ENCODE measurements at regions of chr12 and their contacts with region 1.

Region 1: DNA sequence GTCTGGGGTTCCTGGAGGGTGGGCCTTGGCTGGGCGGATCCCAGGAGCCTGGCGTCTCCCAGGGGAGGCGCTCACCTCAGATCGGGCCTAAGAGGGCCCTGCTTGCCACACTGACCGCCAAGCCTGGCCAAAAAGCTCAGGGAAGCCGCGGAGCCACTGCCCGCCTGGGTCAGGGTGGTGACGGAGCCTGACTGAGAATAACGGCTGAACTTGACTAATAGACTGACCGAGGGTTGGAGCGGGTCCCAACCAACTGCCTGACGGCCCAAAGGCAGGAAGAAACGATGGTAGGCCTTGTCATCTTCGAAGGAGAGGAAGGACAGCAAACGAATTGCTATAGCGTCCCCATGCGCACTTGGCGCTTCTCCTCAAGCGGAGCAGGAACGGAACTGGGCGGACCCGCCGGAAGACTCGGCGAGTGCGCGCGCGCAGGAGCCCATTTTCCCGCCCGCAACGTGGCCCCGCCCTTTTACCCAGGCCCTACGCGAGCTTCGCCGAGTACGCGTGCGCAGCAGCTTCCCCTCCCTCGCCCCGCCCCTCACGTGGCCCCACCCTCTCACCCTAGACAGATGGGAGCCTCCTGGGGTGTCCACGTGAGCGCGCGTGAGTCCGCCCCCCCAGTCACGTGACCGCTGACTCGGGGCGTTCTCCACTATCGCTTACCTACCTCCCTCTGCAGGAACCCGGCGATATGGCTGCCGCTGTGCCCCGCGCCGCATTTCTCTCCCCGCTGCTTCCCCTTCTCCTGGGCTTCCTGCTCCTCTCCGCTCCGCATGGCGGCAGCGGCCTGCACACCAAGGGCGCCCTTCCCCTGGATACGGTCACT is at the starts of genes ERP29 and TMEM116:
- DNase-seq: peak; percentile 95 to 100 (median 100)
- ATAC-seq: peak; percentile 86 to 89
- H3K4me3 Mint-ChIP-seq: peak within 1 kb of the TSS; percentile 89 to 98 (median 94)
- H3K27ac Mint-ChIP-seq: peak within 1 kb of the TSS; percentile 95 to 99 (median 98)
- H3K4me1 Mint-ChIP-seq: peaks cover 38 to 63% (median 60%) of the 10 kb centered on the region in 4 donors
- H3K27me3 Mint-ChIP-seq: no peaks in the 10 kb centered on the region
- polyA plus RNA-seq, gene ERP29: 181 to 199 (median 190) TPM
- polyA plus RNA-seq, gene TMEM116: 12.0 to 15.6 (median 14.0) TPM

Region 2: GRCh38 chr12:111636209-111636945 is 376.6 kb before region 1 on chr12:
- POLR2A ChIA-PET with region 1: no interaction called
- DNase-seq: no peak
- ATAC-seq: no peak
- H3K4me3 Mint-ChIP-seq: no peak overlapping the region
- H3K27ac Mint-ChIP-seq: peak overlapping the region in 1 of 10 donors; percentile 13
- H3K4me1 Mint-ChIP-seq: peaks cover 0 to 4% (median 1%) of the 10 kb centered on the region in 4 donors
- H3K27me3 Mint-ChIP-seq: no peaks in the 10 kb centered on the region

Region 3: GRCh38 chr12:111841750-111842555 is 171.0 kb before region 1 on chr12 and contains the start of gene MAPKAPK5:
- POLR2A ChIA-PET with region 1: interaction called, 11 read pairs
- DNase-seq: peak; percentile 93 to 99 (median 98)
- ATAC-seq: peak; percentile 89 to 91
- H3K4me3 Mint-ChIP-seq: peak within 1 kb of the TSS; percentile 94 to 99 (median 97)
- H3K27ac Mint-ChIP-seq: peak within 1 kb of the TSS; percentile 96 to 100 (median 99)
- H3K4me1 Mint-ChIP-seq: peaks cover 24 to 70% (median 60%) of the 10 kb centered on the region in 4 donors
- H3K27me3 Mint-ChIP-seq: peaks cover 0 to 3% (median 0%) of the 10 kb centered on the region in 5 donors
- polyA plus RNA-seq, gene MAPKAPK5: 25.8 to 54.2 (median 33.5) TPM

Region 4: DNA sequence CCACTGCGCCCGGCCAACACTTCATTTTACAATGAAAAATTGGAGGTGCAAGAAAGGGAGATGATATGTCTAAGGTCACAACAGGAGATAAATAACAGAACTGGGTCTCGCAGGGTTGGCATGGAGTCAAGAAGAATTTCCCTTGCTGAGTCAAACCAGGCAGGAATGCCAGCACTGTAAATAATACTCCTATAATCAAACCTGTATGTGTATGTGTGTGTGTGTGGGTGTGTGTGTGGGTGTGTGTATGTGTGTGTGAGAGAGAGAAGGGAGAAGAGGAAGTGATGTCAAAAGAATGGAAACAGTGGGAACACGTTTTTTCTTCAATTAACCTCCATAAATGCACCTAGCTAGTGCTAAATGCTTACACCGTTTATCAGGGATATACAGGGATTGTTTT is 70.4 kb before region 1 on chr12:
- POLR2A ChIA-PET with region 1: interaction called, 38 read pairs
- DNase-seq: no peak
- ATAC-seq: no peak
- H3K4me3 Mint-ChIP-seq: no peak overlapping the region
- H3K27ac Mint-ChIP-seq: peak overlapping the region in 2 of 10 donors; percentile 14 to 55
- H3K4me1 Mint-ChIP-seq: peaks cover 0 to 16% (median 4%) of the 10 kb centered on the region in 4 donors
- H3K27me3 Mint-ChIP-seq: no peaks in the 10 kb centered on the region

Region 5: DNA sequence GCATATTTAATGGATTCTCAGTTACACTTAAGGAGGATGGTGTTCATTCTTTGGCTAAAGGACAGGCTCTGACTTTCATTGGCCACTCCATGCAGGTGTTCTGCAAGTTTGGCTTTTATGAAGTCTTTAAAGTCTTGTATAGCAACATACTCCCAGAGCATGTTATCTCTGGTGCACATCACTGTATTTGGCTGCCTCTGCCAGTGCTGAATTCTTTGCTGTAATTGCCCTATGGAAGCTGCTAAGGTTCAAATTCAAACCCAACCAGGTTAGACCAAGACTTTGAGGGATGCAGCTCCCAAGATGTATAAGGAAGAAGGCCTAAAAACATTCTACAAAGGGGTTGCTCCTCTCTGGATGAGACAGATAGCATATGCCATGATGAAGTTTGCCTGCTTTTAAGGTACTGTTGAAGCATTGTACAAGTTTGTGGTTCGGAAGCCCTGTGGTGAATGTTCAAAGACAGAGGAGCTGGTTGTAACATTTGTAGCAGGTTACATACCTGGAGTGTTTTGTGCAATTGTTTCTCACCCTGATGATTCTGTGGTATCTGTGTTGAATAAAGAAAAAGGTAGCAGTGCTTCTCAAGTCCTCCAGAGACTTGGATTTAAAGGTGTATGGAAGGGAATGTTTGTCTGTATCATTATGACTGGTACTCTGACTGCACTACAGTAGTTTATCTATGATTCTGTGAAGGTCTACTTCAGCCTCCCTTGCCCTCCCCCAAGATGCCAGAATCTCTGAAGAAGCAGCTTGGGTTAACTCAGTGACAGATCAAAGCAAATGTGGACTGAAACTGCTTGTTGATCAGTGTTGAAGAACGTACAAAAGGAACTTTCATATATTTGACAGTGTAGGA is 19.5 kb before region 1 on chr12:
- POLR2A ChIA-PET with region 1: interaction called, 269 read pairs
- DNase-seq: peak in 8 of 10 donors; percentile 25 to 81 (median 60)
- ATAC-seq: peak; percentile 86 to 88
- H3K4me3 Mint-ChIP-seq: peak overlapping the region; percentile 68 to 95 (median 86)
- H3K27ac Mint-ChIP-seq: peak overlapping the region; percentile 78 to 97 (median 92)
- H3K4me1 Mint-ChIP-seq: peaks cover 28 to 80% (median 76%) of the 10 kb centered on the region in 4 donors
- H3K27me3 Mint-ChIP-seq: no peaks in the 10 kb centered on the region

Region 6: DNA sequence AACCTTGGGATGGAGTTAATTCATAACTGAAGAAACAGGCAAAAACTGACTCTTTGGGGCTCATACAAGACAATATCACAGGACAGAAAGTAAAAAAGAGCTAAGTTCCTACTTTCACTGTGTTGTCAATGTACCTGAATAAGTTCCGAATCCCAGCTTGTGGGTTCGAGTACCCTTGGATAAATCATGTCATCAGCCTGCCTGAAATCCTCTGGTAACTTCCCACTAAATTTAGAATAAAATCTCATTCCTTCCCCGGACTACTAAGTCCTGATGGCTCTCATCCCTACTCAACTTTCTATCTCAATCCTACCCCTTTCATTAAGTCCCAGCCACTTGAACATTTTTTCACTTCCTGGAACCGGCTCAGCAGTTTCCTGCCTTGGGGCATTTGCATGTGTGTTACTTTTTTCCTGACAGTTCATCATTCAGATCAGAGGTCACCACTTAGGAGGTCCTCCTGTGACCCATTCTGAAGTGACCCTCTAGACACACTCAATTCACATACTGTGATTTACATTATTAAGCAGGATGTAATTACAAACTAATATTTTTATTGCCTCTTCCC is 12.9 kb after region 1 on chr12:
- POLR2A ChIA-PET with region 1: interaction called, 15 read pairs
- DNase-seq: no peak
- ATAC-seq: no peak
- H3K4me3 Mint-ChIP-seq: no peak overlapping the region
- H3K27ac Mint-ChIP-seq: peak overlapping the region in 9 of 10 donors; percentile 6 to 89 (median 80)
- H3K4me1 Mint-ChIP-seq: peaks cover 22 to 32% (median 28%) of the 10 kb centered on the region in 4 donors
- H3K27me3 Mint-ChIP-seq: no peaks in the 10 kb centered on the region

Region 7: GRCh38 chr12:112125250-112125999 is 112.4 kb after region 1 on chr12 and contains the start of gene TRAFD1:
- POLR2A ChIA-PET with region 1: interaction called, 15 read pairs
- DNase-seq: peak; percentile 96 to 99 (median 98)
- ATAC-seq: peak; percentile 99
- H3K4me3 Mint-ChIP-seq: peak within 1 kb of the TSS; percentile 70 to 93 (median 86)
- H3K27ac Mint-ChIP-seq: peak within 1 kb of the TSS; percentile 82 to 92 (median 88)
- H3K4me1 Mint-ChIP-seq: peaks cover 9 to 45% (median 35%) of the 10 kb centered on the region in 4 donors
- H3K27me3 Mint-ChIP-seq: no peaks in the 10 kb centered on the region
- polyA plus RNA-seq, gene TRAFD1: 32.5 to 57.6 (median 55.9) TPM

Measured in naive thymus-derived CD8-positive, alpha-beta T cell (primary cell).